GM12878 (cell line): ENCODE measurements at regions of chr12 and their contacts with region 1.

Region 1: DNA sequence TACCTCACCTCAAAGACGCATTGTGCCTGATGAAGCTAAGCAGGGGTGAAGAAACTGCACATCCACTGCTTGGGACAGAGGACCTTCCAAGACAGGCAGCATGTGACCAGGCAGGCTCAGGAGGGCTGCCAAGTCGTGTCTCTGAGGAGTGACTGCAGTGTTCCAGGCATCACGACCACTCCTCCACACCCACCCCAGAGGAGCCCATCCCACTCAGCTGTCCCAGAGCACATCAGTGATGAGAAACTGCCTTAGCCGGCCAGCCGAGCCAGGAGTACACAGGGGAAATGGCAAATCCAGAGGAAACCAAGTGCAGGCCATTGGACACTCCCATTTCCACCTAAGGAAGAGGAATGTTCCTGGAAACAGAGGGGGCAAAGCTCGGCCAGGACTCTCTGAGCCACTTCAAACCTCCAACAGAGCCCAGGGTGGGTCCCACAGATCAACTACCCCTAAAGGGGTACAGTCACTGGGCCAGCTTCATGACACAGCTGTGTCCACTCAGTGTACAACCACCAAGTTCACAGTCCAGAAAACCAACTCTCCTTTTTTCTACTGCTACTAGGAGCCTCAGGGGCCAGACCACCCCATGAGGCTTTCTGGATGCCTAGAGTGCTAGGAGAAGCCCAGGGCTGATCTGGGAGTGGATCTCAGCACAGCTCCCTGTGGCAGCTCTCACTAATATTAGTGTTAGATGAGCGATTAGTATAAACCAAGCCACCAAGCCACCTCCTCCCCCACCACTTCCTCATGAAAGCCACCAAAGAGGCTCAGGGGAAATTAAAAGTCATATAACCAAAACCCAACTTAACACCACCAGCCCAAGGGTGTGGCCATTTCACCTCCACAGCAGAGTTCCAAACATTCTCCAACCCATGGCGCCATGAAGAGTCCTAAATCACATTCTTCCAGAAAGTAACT is 15.4 kb downstream of the PXN start:
- DNase-seq: no peak
- ATAC-seq: peak; percentile 75
- H3K4me3 ChIP-seq: no peak overlapping the region
- H3K27ac ChIP-seq: no peak overlapping the region
- H3K4me1 ChIP-seq: peaks cover 35% of the 10 kb centered on the region
- H3K27me3 ChIP-seq: no peaks in the 10 kb centered on the region
- CTCF ChIP-seq: no peak
- EP300 ChIP-seq: no peak
- POLR2A ChIP-seq: no peak
- RAD21 ChIP-seq: no peak

Region 2: DNA sequence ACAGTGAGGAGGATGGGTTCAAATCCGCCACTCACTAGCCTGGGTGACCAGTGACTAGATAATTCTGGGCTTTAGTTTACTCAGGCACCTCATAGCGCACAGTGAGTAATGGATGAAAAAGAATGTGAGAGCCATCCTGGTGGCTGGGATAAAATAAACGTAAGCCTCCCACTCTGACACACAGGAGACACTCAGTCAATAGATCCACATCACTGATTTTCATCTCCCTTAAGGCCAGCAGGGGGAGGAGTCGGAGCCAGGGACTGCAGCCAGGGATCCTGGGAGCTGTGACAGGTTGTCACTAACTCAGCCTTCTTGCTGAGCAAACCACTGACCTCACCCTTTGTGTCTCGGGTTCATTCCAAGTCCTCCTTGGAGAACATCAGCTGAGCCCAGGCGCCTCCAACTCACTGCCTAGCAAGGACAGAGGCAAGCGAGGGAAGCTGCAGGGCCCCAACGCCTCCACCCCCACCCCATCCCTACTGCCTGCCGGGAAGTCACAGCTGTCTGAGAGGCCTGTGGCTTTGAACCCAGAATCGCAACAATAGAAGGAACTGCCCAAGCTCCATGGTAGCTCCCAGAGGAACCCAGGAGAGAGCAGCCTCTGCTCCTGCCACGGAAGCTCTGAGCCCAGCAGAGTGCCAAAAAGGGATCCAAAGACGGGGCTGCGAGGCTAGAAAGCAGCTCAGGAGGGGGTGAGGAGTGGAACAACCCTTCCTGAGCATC is 15.3 kb before region 1 on chr12:
- CTCF ChIA-PET with region 1: interaction called, 13 read pairs
- POLR2A ChIA-PET with region 1: interaction called, 6 read pairs
- RAD21 ChIA-PET with region 1: no interaction called
- SMC1A ChIA-PET with region 1: interaction called, 4 read pairs
- in situ Hi-C with region 1: no loop called
- intact Hi-C with region 1: no loop called
- DNase-seq: no peak
- ATAC-seq: peak; percentile 66
- H3K4me3 ChIP-seq: no peak overlapping the region
- H3K27ac ChIP-seq: no peak overlapping the region
- H3K4me1 ChIP-seq: peaks cover 5% of the 10 kb centered on the region; the same call in 1 of the 2 replicates
- H3K27me3 ChIP-seq: no peaks in the 10 kb centered on the region; a peak in 1 of 4 replicates
- CTCF ChIP-seq: peak; percentile 9 to 26 (median 26); a peak in 4 of 6 replicates
- EP300 ChIP-seq: no peak
- POLR2A ChIP-seq: no peak
- RAD21 ChIP-seq: no peak